ENCODE measurements at regions of chr2 and their contacts with region 1.

Region 1: GRCh38 chr2:121736462-121737341 is at the start of gene NIFK:
- DNase-seq: peak; percentile 97 to 100 (median 100)
- ATAC-seq: peak; percentile 85 to 86
- H3K4me3 Mint-ChIP-seq: peak within 1 kb of the TSS; percentile 94 to 100 (median 96)
- H3K27ac Mint-ChIP-seq: peak within 1 kb of the TSS; percentile 85 to 99 (median 97)
- H3K4me1 Mint-ChIP-seq: peaks cover 16 to 60% (median 54%) of the 10 kb centered on the region in 4 donors
- H3K27me3 Mint-ChIP-seq: no peaks in the 10 kb centered on the region
- polyA plus RNA-seq, gene NIFK: 62.8 to 88.6 (median 77.1) TPM

Region 2: GRCh38 chr2:121755236-121756111 is 18.8 kb after region 1 on chr2 and contains the start of gene TSN:
- POLR2A ChIA-PET with region 1: interaction called, 40 read pairs
- DNase-seq: peak; percentile 92 to 98 (median 96)
- ATAC-seq: peak; percentile 99
- H3K4me3 Mint-ChIP-seq: peak within 1 kb of the TSS; percentile 92 to 100 (median 96)
- H3K27ac Mint-ChIP-seq: peak within 1 kb of the TSS; percentile 86 to 99 (median 94)
- H3K4me1 Mint-ChIP-seq: peaks cover 9 to 37% (median 29%) of the 10 kb centered on the region in 4 donors
- H3K27me3 Mint-ChIP-seq: no peaks in the 10 kb centered on the region
- polyA plus RNA-seq, gene TSN: 74.8 to 90.9 (median 79.2) TPM

Measured in naive thymus-derived CD8-positive, alpha-beta T cell (primary cell).